Right ventricle myocardium inferior (tissue), 1 donor: ENCODE measurements at regions of chr21 and their contacts with region 1.

Region 1: DNA sequence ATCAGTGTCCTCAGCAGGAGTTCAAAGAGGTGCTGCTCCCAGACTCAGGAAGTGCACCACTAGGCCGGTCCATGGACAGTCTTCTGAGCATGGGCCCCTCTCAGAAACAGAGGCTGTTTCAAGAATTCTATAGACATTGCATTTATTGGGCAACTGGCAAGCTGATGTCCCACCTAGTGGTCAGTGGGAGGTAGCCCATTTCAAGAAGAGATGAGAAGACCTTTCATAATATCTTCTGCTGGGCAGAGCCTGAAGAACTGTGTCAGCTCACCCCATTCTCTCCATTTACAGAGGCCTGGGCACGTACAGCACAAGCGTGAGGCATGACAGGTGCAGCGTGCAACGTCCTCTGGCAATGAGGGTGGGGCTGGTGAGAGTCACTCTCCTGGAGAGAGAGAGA is 216.0 kb downstream of the DYRK1A start:
- DNase-seq: no peak
- ATAC-seq: peak; percentile 48

Region 2: GRCh38 chr21:36881228-36881627 is 701.4 kb before region 1 on chr21:
- intact Hi-C with region 1: no loop called
- DNase-seq: no peak
- ATAC-seq: no peak

Region 3: GRCh38 chr21:37490084-37490483 is 92.5 kb before region 1 on chr21:
- intact Hi-C with region 1: loop called (anchors 5 kb)
- DNase-seq: no peak
- ATAC-seq: no peak

Region 4: GRCh38 chr21:37532868-37533780 is 49.5 kb before region 1 on chr21:
- intact Hi-C with region 1: no loop called
- DNase-seq: no peak
- ATAC-seq: no peak